Breast epithelium (tissue), 4 donors: ENCODE measurements at regions of chr2 and their contacts with region 1.

Region 1: GRCh38 chr2:72103690-72104089 is 44.0 kb downstream of the CYP26B1 start:
- DNase-seq: no peak
- H3K4me3 ChIP-seq: no peak overlapping the region
- H3K27ac ChIP-seq: no peak overlapping the region
- H3K4me1 ChIP-seq: no peaks in the 10 kb centered on the region
- H3K27me3 ChIP-seq: no peaks in the 10 kb centered on the region
- CTCF ChIP-seq: no peak
- POLR2A ChIP-seq: no peak

Region 2: DNA sequence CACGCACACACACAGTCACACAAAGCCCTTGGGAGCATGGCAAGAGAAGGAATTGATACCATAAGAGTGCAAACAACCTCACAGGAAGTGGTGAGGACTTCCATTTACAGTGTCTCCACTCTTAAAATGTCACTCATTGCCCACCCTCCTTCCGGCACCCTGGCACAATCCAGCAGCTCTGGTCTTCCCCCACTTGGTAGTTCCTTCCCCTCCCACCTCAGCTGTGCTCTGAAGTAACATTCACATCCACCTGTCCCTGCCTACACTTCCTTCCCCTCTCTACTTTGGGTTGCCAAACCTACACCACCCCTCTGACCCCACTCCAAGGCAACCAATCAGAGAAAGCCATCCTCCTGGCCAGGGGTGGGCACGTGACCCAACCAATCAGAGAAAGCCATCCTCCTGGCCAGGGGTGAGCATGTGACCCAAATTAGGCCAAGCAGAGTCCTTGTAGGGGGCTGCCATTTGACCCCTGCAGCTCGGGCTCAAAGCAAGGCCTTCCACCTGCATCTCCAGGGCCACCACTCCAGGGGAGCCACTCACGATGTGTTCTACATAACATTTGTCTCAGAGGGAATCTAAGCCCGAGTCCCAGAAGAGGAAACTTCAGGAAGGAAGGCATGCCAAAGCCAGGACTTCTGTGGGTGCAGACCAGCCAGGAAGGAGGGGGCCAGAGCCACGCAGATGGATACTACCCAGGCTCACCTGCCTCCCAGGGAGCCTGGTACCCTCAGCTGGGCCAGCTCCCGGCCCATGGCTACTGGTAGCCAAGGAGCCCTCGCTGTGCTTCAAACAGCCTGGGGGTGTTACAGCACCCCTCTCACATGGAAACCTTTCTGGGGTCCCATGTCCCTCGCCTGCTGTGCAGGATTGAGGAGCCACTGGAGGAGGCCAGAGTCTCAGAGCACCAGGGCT is 22.8 kb after region 1 on chr2:
- intact Hi-C with region 1: loop called (anchors 1 kb)
- DNase-seq: peak in 1 of 2 donors; percentile 31
- H3K4me3 ChIP-seq: no peak overlapping the region
- H3K27ac ChIP-seq: no peak overlapping the region
- H3K4me1 ChIP-seq: no peaks in the 10 kb centered on the region
- H3K27me3 ChIP-seq: no peaks in the 10 kb centered on the region
- CTCF ChIP-seq: no peak
- POLR2A ChIP-seq: no peak

Region 3: GRCh38 chr2:72953976-72954375 is 850.3 kb after region 1 on chr2:
- intact Hi-C with region 1: no loop called
- DNase-seq: no peak
- H3K4me3 ChIP-seq: no peak overlapping the region
- H3K27ac ChIP-seq: no peak overlapping the region
- H3K4me1 ChIP-seq: no peaks in the 10 kb centered on the region
- H3K27me3 ChIP-seq: no peaks in the 10 kb centered on the region
- CTCF ChIP-seq: no peak
- POLR2A ChIP-seq: no peak